Activated naive CD8-positive, alpha-beta T cell treated with anti-CD3 and anti-CD28 coated beads, Interleukin-2, amount 10 ng/mL, durations not matched to agents 7 days and 5 days (primary cell): ENCODE measurements at regions of chr2 and their contacts with region 1.

Region 1: DNA sequence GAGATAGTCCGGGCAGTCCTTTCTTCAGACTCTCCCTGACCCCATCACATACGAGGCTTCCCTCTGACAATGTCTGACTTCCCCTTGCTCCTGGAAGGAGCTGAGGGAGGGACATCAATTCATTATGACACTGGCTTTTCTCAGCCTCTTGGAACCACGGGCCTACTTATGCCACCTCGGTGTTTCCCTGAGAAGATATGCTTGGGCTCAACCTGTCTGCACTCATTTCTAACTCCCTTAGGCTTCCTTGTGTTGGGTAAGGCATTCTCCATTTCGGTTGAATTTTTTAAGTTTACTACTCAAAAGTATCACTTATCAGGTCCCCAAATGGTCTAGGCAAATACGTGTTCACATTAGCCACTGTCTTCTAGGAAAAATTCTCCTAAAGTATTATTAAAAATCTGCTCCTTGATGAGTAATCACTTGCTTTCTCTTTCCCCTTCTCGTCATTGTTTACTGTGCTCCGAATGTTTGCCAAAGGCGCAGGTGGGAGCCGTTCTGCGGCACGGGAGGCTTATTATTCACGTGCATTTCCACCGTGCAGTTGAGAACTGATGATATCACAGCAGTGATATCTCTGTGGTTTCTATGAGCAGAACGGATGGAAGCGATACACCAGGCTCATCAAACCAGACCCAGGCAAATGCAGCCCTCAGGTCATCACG is 33.1 kb downstream of the ARL4C start:
- DNase-seq: peak; percentile 49
- ATAC-seq: peak; percentile 74
- H3K4me3 Mint-ChIP-seq: peak overlapping the region; percentile 86
- H3K27ac Mint-ChIP-seq: peak overlapping the region; percentile 90
- H3K4me1 Mint-ChIP-seq: peaks cover 42% of the 10 kb centered on the region
- H3K27me3 Mint-ChIP-seq: peaks cover 3% of the 10 kb centered on the region

Region 2: GRCh38 chr2:234483568-234484251 is 20.0 kb after region 1 on chr2:
- POLR2A ChIA-PET with region 1: interaction called, 13 read pairs
- DNase-seq: peak; percentile 79
- ATAC-seq: peak; percentile 78
- H3K4me3 Mint-ChIP-seq: peak overlapping the region; percentile 72
- H3K27ac Mint-ChIP-seq: peak overlapping the region; percentile 85
- H3K4me1 Mint-ChIP-seq: peaks cover 57% of the 10 kb centered on the region
- H3K27me3 Mint-ChIP-seq: no peaks in the 10 kb centered on the region

Region 3: GRCh38 chr2:234488913-234489451 is 25.2 kb after region 1 on chr2:
- POLR2A ChIA-PET with region 1: interaction called, 15 read pairs
- DNase-seq: peak; percentile 68
- ATAC-seq: peak; percentile 76
- H3K4me3 Mint-ChIP-seq: peak overlapping the region; percentile 97
- H3K27ac Mint-ChIP-seq: peak overlapping the region; percentile 99
- H3K4me1 Mint-ChIP-seq: peaks cover 71% of the 10 kb centered on the region
- H3K27me3 Mint-ChIP-seq: no peaks in the 10 kb centered on the region